ENCODE measurements at regions of chr21 and their contacts with region 1.

Region 1: GRCh38 chr21:43333298-43334062 is 93.5 kb downstream of the SIK1 start:
- DNase-seq: peak; percentile 49 to 74 (median 59)
- H3K4me3 ChIP-seq: no peak overlapping the region
- H3K27ac ChIP-seq: peak overlapping the region; percentile 47 to 77
- H3K4me1 ChIP-seq: peaks cover 19% of the 10 kb centered on the region
- H3K27me3 ChIP-seq: no peaks in the 10 kb centered on the region
- CTCF ChIP-seq: no peak
- EP300 ChIP-seq: no peak
- POLR2A ChIP-seq: no peak

Region 2: DNA sequence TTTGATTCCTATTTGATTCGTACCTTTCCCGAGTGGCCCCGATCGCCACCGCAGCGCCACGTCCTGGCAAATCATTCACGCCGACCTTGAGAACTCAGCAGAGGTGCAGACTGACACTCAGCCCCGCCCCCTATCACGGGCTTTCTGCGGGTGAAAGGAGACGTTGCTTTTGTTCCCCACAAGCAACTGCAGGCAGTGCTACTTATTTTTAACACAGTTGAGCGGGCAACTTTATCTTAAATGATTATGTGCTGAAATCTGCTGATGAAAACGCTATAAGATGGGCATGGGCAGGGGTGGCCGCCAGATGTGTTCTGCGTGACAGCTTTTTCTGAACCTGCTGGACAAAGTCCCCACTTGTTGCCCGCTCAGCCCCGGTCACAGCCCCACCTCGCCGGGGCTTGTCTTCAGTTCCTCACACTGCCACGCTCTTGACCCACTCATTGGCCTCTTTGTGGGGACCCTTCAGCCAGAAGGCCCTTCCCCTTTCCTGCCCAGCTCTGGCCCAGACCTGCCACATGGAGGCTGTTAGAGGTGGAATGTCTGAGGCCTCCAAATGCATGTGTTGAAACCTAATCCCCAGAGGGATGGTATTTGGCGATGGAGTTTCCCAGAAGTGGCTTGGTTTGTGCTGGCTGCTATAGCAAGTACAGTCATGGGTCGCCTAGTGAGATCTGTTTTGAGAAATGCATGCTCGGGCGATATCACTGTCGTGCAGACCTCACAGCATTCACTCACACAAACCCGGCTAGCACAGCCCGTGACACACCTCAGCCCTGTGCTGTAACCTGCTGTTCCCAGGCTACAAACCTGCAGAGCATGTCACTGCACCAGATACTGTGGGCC is 369.8 kb after region 1 on chr21:
- intact Hi-C with region 1: loop called in 1 of 4 experiments (anchors 5 kb)
- DNase-seq: peak in 2 of 5 donors; percentile 33 to 59
- H3K4me3 ChIP-seq: no peak overlapping the region
- H3K27ac ChIP-seq: no peak overlapping the region
- H3K4me1 ChIP-seq: peaks cover 9% of the 10 kb centered on the region
- H3K27me3 ChIP-seq: no peaks in the 10 kb centered on the region
- CTCF ChIP-seq: no peak
- EP300 ChIP-seq: no peak
- POLR2A ChIP-seq: no peak

Measured in ovary (tissue), 10 donors.